Activated CD8-positive, alpha-beta T cell treated with anti-CD3 and anti-CD28 coated beads, Interleukin-2, amount 10 ng/mL, durations not matched to agents 7 days and 5 days (primary cell): ENCODE measurements at regions of chr4 and their contacts with region 1.

Region 1: DNA sequence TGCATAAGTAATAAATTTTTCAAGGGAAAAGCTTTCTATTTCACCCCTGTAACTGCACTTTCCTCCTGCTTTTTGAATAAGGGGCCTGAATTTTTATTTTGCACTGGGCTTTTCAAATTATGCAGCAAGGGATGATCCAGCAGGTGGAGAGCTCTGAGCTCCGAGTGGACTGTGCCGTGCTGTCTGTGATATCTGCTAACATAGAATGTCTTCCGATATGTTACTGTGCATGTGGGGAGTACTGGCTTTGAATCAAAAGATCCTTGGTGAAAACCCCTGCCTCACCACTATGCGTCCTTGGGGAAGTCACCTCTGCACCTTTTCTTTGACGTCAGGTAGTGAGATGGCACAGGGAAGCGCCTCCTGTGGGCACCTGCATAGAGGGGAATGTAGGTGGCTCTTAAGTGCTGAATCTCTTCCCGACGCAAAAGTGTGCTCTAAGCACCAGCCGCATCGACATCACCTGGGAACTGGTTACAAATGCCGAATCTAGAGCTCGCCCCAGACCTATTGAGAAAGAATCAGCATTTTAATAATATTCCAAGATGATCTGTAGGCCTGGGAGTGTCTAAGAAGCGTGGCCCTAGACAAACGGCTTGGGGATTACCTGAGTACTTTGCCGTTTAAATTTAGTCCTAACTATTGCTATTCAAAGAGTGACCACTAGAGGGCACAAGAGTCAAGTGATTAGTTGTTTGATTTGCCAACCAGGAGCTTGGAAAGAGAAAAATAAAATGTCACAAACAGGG is 19.2 kb upstream of the WFS1 start:
- DNase-seq: peak; percentile 42
- ATAC-seq: peak; percentile 33
- H3K4me3 Mint-ChIP-seq: no peak overlapping the region
- H3K27ac Mint-ChIP-seq: no peak overlapping the region
- H3K4me1 Mint-ChIP-seq: no peaks in the 10 kb centered on the region
- H3K27me3 Mint-ChIP-seq: peaks cover 26% of the 10 kb centered on the region

Region 2: DNA sequence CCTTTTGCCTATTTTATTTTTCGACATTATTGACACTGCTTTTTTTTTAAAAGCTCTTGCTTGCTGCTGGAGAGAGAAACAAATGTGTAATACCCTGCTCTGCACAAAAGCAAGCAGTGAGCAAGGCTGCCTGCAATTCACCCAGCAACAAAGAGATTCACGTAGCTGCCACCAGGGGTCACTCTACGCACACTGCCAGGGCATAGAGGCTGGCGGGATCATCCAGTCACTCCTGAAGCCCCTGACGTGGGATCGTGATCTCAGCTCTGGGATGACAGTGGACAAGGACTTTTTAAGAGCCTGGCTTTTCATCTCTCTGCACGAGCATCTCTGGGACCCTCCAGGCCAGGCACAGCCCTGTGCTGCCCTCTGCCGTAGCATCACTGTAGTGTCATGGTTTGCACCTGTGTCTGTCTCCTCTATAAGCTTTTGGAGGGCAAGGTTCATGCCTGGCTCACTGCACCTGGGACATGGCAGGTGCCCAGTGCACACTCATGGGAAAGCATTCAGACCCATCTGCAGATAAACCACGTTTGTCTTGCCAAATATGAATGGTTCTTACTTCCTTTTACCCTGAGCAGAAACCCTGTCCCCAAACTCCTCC is 252.0 kb before region 1 on chr4:
- CTCF ChIA-PET with region 1: interaction called, 15 read pairs
- POLR2A ChIA-PET with region 1: no interaction called
- DNase-seq: peak; percentile 65
- ATAC-seq: peak; percentile 71
- H3K4me3 Mint-ChIP-seq: no peak overlapping the region
- H3K27ac Mint-ChIP-seq: no peak overlapping the region
- H3K4me1 Mint-ChIP-seq: peaks cover 7% of the 10 kb centered on the region
- H3K27me3 Mint-ChIP-seq: no peaks in the 10 kb centered on the region

Region 3: GRCh38 chr4:6180841-6181631 is 69.4 kb before region 1 on chr4:
- CTCF ChIA-PET with region 1: interaction called, 21 read pairs
- POLR2A ChIA-PET with region 1: no interaction called
- DNase-seq: peak; percentile 81
- ATAC-seq: peak; percentile 89
- H3K4me3 Mint-ChIP-seq: peak overlapping the region; percentile 43
- H3K27ac Mint-ChIP-seq: peak overlapping the region; percentile 97
- H3K4me1 Mint-ChIP-seq: peaks cover 83% of the 10 kb centered on the region
- H3K27me3 Mint-ChIP-seq: no peaks in the 10 kb centered on the region

Region 4: GRCh38 chr4:6225469-6225868 is 24.9 kb before region 1 on chr4:
- CTCF ChIA-PET with region 1: interaction called, 11 read pairs
- POLR2A ChIA-PET with region 1: no interaction called
- DNase-seq: peak; percentile 51
- ATAC-seq: no peak
- H3K4me3 Mint-ChIP-seq: no peak overlapping the region
- H3K27ac Mint-ChIP-seq: no peak overlapping the region
- H3K4me1 Mint-ChIP-seq: no peaks in the 10 kb centered on the region
- H3K27me3 Mint-ChIP-seq: peaks cover 29% of the 10 kb centered on the region

Region 5: DNA sequence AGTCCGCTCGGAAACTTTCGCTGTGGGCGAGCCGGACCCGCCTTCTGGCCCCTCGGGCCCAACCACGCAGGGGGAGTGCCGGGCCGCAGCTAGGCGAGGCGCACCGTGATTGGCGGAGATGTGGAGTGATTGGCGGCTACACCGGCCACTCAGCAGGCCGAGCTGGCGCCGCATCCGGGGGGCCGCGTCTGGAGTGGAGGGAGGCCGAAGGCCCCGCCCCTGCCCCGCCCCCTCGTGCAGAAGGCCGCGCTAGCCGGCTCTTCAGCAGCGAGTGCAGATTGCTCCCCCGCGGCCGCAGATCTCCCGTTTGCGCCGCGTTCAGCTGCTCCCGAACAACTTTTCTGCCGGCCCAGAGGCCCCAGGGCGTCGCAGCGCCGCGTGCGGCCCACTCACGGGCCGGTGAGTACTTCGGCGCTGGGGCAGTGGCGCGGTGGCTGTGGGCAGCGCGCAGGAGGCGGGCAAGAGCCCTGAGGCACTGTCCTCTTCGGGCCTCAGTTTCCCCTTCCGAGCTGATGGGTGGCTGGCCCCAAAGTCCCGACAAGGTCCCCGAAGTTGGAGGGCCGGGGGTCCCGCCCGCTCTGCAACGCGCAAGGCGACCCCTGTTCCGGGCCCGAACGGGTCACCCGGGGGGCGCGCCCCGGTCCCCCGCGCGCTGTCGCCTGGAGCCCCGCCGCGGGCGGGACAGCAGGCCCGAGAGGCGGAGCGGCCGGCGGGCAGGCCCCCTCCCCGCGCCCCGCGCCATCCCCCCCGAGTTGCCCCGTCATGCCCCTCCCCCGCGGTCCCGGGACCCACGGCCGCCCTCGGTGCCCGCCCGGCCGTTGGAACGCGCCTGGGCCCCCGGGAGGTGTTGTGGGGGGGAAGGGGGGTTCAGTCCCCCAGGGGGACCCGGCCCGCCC is 19.5 kb after region 1 on chr4 and contains the start of gene WFS1:
- CTCF ChIA-PET with region 1: interaction called, 32 read pairs
- POLR2A ChIA-PET with region 1: no interaction called
- DNase-seq: peak; percentile 96
- ATAC-seq: peak; percentile 100
- H3K4me3 Mint-ChIP-seq: peak within 1 kb of the TSS; percentile 72
- H3K27ac Mint-ChIP-seq: no peak within 1 kb of the TSS
- H3K4me1 Mint-ChIP-seq: peaks cover 23% of the 10 kb centered on the region
- H3K27me3 Mint-ChIP-seq: peaks cover 47% of the 10 kb centered on the region
- total RNA-seq, gene WFS1: 0.97 to 1.3 TPM

Region 6: GRCh38 chr4:6327041-6327917 is 76.9 kb after region 1 on chr4:
- CTCF ChIA-PET with region 1: interaction called, 226 read pairs
- POLR2A ChIA-PET with region 1: interaction called, 5 read pairs
- DNase-seq: peak; percentile 85
- ATAC-seq: peak; percentile 84
- H3K4me3 Mint-ChIP-seq: no peak overlapping the region
- H3K27ac Mint-ChIP-seq: no peak overlapping the region
- H3K4me1 Mint-ChIP-seq: peaks cover 21% of the 10 kb centered on the region
- H3K27me3 Mint-ChIP-seq: peaks cover 17% of the 10 kb centered on the region